Common myeloid progenitor, CD34-positive (primary cell): ENCODE measurements at regions of chr7 and their contacts with region 1.

Region 1: DNA sequence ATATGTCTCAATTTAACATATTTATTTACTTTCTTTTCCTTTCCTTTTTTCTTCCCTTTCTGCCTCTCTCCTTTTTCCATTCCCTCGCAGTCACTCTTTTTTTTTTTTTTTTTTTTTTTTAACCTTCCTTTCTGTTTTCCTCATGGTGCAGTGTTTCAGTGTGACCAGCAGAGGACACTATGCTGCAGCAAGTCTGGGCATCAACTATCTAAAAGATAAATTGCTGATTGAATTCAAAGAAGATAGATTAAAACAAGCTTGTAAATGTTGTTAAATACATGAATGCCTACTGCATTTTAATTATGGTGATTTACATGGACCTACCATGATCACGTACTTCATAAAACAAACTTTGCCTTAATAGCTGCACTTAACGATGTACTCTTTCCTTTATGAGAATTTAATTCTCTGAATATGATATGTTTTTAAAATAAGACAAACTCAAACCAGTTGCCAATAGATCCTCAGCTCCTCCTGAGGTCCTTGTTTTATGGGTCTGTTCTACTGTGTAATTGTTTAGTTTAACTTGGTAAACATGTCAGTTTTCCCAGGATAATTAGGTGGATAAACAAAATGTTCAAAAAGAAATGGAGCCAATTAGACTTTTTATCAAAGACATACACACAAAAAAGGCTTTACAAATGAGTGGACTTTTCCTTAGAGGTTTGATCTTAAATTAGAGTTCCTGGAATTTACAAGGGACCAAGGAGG is 101.0 kb upstream of the AGR3 start:
- DNase-seq: peak; percentile 44 to 68 (median 65)
- H3K4me3 ChIP-seq: peak overlapping the region in 1 of 7 experiments; percentile 20
- H3K27ac ChIP-seq: no peak overlapping the region
- H3K4me1 ChIP-seq: peaks cover 0 to 5% (median under 1%) of the 10 kb centered on the region in 4 experiments
- H3K27me3 ChIP-seq: peaks cover 0 to 2% (median 0%) of the 10 kb centered on the region in 5 experiments

Region 2: GRCh38 chr7:16268821-16269768 is 713.7 kb before region 1 on chr7:
- CTCF ChIA-PET with region 1: no interaction called
- POLR2A ChIA-PET with region 1: no interaction called
- DNase-seq: peak; percentile 86 to 99 (median 96)
- H3K4me3 ChIP-seq: no peak overlapping the region
- H3K27ac ChIP-seq: peak overlapping the region; percentile 19 to 74
- H3K4me1 ChIP-seq: peaks cover 0 to 15% (median 5%) of the 10 kb centered on the region in 4 experiments
- H3K27me3 ChIP-seq: no peaks in the 10 kb centered on the region

Region 3: GRCh38 chr7:16926283-16926682 is 56.5 kb before region 1 on chr7:
- CTCF ChIA-PET with region 1: interaction called, 21 read pairs
- POLR2A ChIA-PET with region 1: no interaction called
- DNase-seq: peak; percentile 59 to 73 (median 73)
- H3K4me3 ChIP-seq: peak overlapping the region in 1 of 7 experiments; percentile 13
- H3K27ac ChIP-seq: no peak overlapping the region
- H3K4me1 ChIP-seq: peaks cover 9 to 36% (median 26%) of the 10 kb centered on the region in 4 experiments
- H3K27me3 ChIP-seq: peaks cover 0 to 8% (median 0%) of the 10 kb centered on the region in 5 experiments

Region 4: DNA sequence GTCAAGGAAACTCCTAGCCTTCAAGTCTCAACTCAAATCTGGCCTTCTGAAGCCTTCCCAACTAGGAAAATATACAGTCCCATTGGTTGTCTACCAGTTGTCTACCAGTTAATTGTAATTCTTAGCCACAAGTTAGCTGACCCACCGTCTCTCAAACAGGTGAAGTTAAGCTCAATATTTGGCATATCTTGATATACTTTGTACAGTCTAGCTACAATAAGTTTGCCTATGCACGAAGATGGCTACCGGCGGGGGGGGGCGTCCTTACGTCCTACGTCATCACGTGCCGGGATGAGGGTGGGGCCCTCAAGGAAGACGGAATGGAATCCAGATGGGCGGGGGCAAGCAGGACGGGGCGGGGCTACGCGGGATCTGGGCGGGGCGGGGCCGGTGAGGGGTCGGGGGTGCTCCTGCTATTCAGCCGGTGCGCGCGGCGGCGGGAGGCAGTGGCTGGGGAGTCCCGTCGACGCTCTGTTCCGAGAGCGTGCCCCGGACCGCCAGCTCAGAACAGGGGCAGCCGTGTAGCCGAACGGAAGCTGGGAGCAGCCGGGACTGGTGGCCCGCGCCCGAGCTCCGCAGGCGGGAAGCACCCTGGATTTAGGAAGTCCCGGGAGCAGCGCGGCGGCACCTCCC is 315.5 kb after region 1 on chr7 and contains the start of gene AHR:
- CTCF ChIA-PET with region 1: interaction called, 15 read pairs
- POLR2A ChIA-PET with region 1: no interaction called
- DNase-seq: peak; percentile 95 to 97 (median 96)
- H3K4me3 ChIP-seq: peak within 1 kb of the TSS; percentile 85 to 100 (median 93)
- H3K27ac ChIP-seq: peak within 1 kb of the TSS; percentile 46 to 71
- H3K4me1 ChIP-seq: peaks cover 17 to 35% (median 33%) of the 10 kb centered on the region in 4 experiments
- H3K27me3 ChIP-seq: no peaks in the 10 kb centered on the region

Region 5: DNA sequence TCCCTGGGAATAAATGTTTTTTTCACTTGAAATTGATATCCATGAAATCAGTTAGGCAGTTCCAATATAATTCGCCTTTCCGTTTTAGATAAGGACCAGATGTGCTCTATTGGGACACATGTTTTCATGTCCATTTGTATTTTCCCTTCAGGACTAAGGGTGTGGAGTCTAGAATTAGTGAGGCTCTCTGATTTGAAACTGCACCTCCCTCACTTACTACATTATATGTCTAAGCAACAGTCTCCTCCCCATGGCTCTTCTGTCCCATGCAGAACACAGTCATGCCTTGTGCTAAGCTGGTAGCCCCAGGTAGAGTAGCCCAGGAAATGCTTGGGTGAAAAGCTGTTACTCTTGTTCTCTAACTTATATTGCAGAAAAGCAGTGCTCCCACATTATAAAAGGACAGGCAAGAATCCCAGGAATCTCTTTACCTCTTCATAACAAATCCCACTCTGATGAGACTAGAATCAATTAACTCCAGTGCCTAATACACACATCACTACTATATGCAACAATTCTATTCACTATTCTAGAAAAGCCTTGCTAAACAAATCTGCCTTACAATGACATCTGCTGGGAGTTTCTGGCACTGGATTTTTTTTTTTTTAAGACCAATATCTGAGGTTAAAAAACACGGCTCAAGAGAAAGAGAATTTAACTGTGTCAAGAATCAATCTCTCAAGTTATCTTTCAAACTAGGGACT is 663.6 kb after region 1 on chr7:
- CTCF ChIA-PET with region 1: interaction called, 10 read pairs
- POLR2A ChIA-PET with region 1: no interaction called
- DNase-seq: peak; percentile 24 to 52 (median 45)
- H3K4me3 ChIP-seq: no peak overlapping the region
- H3K27ac ChIP-seq: no peak overlapping the region
- H3K4me1 ChIP-seq: no peaks in the 10 kb centered on the region
- H3K27me3 ChIP-seq: no peaks in the 10 kb centered on the region